ENCODE measurements at regions of chr15 and their contacts with region 1.

Region 1: DNA sequence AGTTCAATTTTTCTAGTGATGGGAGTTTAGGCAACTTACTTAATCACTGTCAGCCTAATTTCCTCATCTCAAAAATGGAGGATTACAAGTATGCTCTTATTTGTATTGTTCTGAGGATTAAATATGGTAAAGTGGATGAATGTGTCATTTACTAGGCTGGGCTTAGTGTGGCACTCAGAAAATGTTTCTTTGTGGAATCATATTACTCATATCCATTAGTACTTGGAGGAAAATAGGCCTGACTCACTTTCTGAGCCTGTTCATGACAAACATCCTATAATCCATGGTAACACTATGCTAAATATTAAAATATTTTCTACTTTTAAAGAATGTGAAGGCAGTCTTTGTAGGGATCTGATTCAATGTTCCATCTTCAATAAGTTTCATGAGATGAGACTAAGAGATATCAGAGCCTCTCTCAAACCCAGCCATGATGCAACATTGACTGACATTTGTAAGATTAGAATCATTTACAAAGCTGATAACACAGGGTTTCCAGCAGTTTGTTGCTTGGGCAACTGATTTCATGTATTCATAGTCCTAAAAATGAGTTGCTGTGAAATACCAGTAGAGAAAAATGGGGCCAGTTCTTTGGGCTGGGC is 1048.5 kb downstream of the NTRK3 start:
- DNase-seq: peak; percentile 88
- H3K4me3 ChIP-seq: no peak overlapping the region
- H3K27ac ChIP-seq: peak overlapping the region; percentile 97
- H3K4me1 ChIP-seq: peaks cover 39% of the 10 kb centered on the region
- H3K27me3 ChIP-seq: no peaks in the 10 kb centered on the region
- CTCF ChIP-seq: no peak

Region 2: GRCh38 chr15:87167044-87167443 is 41.0 kb before region 1 on chr15:
- CTCF ChIA-PET with region 1: no interaction called
- dilution Hi-C with region 1: no loop called
- in situ Hi-C with region 1: no loop called
- intact Hi-C with region 1: loop called (anchors 2 kb)
- DNase-seq: peak; percentile 50
- H3K4me3 ChIP-seq: no peak overlapping the region
- H3K27ac ChIP-seq: peak overlapping the region; percentile 43
- H3K4me1 ChIP-seq: peaks cover 14% of the 10 kb centered on the region
- H3K27me3 ChIP-seq: no peaks in the 10 kb centered on the region
- CTCF ChIP-seq: no peak

Region 3: GRCh38 chr15:87312221-87312620 is 104.2 kb after region 1 on chr15:
- CTCF ChIA-PET with region 1: no interaction called
- dilution Hi-C with region 1: no loop called
- in situ Hi-C with region 1: no loop called
- intact Hi-C with region 1: no loop called
- DNase-seq: no peak
- H3K4me3 ChIP-seq: no peak overlapping the region
- H3K27ac ChIP-seq: no peak overlapping the region
- H3K4me1 ChIP-seq: no peaks in the 10 kb centered on the region
- H3K27me3 ChIP-seq: no peaks in the 10 kb centered on the region
- CTCF ChIP-seq: no peak

Region 4: GRCh38 chr15:87477793-87478686 is 270.0 kb after region 1 on chr15:
- CTCF ChIA-PET with region 1: no interaction called
- dilution Hi-C with region 1: no loop called
- in situ Hi-C with region 1: no loop called
- intact Hi-C with region 1: loop called (anchors 5 kb)
- DNase-seq: peak; percentile 85
- H3K4me3 ChIP-seq: no peak overlapping the region
- H3K27ac ChIP-seq: peak overlapping the region; percentile 71
- H3K4me1 ChIP-seq: peaks cover 9% of the 10 kb centered on the region
- H3K27me3 ChIP-seq: no peaks in the 10 kb centered on the region
- CTCF ChIP-seq: peak; percentile 19 to 20

Measured in mammary epithelial cell (primary cell).